CD4-positive, alpha-beta T cell (primary cell): ENCODE measurements at regions of chr9 and their contacts with region 1.

Region 1: GRCh38 chr9:2023532-2023931 is 8.4 kb downstream of the SMARCA2 start:
- DNase-seq: no peak
- ATAC-seq: no peak
- H3K4me3 ChIP-seq: peak overlapping the region; percentile 1
- H3K4me3 Mint-ChIP-seq: peak overlapping the region; percentile 32
- H3K27ac ChIP-seq: peak overlapping the region in 1 of 2 donors; percentile 59
- H3K27ac Mint-ChIP-seq: peak overlapping the region; percentile 84
- H3K4me1 ChIP-seq: peaks cover 64% of the 10 kb centered on the region
- H3K4me1 Mint-ChIP-seq: peaks cover 99% of the 10 kb centered on the region
- H3K27me3 ChIP-seq: no peaks in the 10 kb centered on the region
- H3K27me3 Mint-ChIP-seq: no peaks in the 10 kb centered on the region
- CTCF ChIP-seq: no peak

Region 2: GRCh38 chr9:1077616-1078015 is 945.9 kb before region 1 on chr9:
- CTCF ChIA-PET with region 1: no interaction called
- POLR2A ChIA-PET with region 1: no interaction called
- intact Hi-C with region 1: no loop called
- DNase-seq: no peak
- ATAC-seq: no peak
- H3K4me3 ChIP-seq: no peak overlapping the region
- H3K4me3 Mint-ChIP-seq: no peak overlapping the region
- H3K27ac ChIP-seq: no peak overlapping the region
- H3K27ac Mint-ChIP-seq: no peak overlapping the region
- H3K4me1 ChIP-seq: no peaks in the 10 kb centered on the region
- H3K4me1 Mint-ChIP-seq: no peaks in the 10 kb centered on the region
- H3K27me3 ChIP-seq: peaks cover 3% of the 10 kb centered on the region in 2 experiments
- H3K27me3 Mint-ChIP-seq: peaks cover 33% of the 10 kb centered on the region
- CTCF ChIP-seq: no peak

Region 3: GRCh38 chr9:2036844-2037590 is 13.5 kb after region 1 on chr9:
- CTCF ChIA-PET with region 1: no interaction called
- POLR2A ChIA-PET with region 1: interaction called, 5 read pairs
- intact Hi-C with region 1: loop called in 1 of 2 experiments (anchors 2 kb)
- DNase-seq: no peak
- ATAC-seq: no peak
- H3K4me3 ChIP-seq: no peak overlapping the region
- H3K4me3 Mint-ChIP-seq: no peak overlapping the region
- H3K27ac ChIP-seq: no peak overlapping the region
- H3K27ac Mint-ChIP-seq: no peak overlapping the region
- H3K4me1 ChIP-seq: no peaks in the 10 kb centered on the region
- H3K4me1 Mint-ChIP-seq: peaks cover 60% of the 10 kb centered on the region
- H3K27me3 ChIP-seq: no peaks in the 10 kb centered on the region
- H3K27me3 Mint-ChIP-seq: no peaks in the 10 kb centered on the region
- CTCF ChIP-seq: no peak

Region 4: DNA sequence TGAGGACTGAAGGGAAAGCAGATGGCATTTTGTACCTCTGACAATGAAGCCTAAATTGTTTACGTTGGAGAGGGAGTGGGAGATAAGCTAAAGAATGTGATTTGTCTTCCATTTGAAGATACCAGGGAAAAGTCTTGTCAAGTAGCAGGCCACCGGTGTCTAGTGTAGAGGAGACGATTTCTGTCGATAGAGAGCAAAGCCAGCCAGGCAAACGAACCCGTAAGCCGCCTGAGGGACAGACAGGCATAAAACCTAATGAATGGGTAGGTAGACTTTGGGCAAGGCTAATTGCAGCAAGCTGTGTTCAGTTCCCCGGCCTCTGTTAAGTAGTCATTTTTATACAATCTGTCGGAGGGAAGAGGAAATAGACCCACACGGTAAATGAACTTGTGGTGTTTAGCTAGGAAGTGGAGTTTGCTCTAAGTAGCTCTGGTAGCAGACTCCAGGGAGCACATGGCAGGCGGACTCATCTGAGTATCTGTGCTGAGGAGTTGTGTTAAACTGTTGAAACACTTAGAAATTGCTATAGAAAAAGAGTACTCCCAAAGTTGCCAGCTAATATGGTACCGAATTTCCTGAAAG is 20.4 kb after region 1 on chr9:
- CTCF ChIA-PET with region 1: interaction called, 3 read pairs
- POLR2A ChIA-PET with region 1: interaction called, 5 read pairs
- intact Hi-C with region 1: loop called in 1 of 2 experiments (anchors 2 kb)
- DNase-seq: no peak
- ATAC-seq: peak; percentile 21
- H3K4me3 ChIP-seq: no peak overlapping the region
- H3K4me3 Mint-ChIP-seq: peak overlapping the region; percentile 2
- H3K27ac ChIP-seq: no peak overlapping the region
- H3K27ac Mint-ChIP-seq: peak overlapping the region; percentile 77
- H3K4me1 ChIP-seq: peaks cover 9% of the 10 kb centered on the region
- H3K4me1 Mint-ChIP-seq: peaks cover 64% of the 10 kb centered on the region
- H3K27me3 ChIP-seq: no peaks in the 10 kb centered on the region
- H3K27me3 Mint-ChIP-seq: no peaks in the 10 kb centered on the region
- CTCF ChIP-seq: no peak

Region 5: DNA sequence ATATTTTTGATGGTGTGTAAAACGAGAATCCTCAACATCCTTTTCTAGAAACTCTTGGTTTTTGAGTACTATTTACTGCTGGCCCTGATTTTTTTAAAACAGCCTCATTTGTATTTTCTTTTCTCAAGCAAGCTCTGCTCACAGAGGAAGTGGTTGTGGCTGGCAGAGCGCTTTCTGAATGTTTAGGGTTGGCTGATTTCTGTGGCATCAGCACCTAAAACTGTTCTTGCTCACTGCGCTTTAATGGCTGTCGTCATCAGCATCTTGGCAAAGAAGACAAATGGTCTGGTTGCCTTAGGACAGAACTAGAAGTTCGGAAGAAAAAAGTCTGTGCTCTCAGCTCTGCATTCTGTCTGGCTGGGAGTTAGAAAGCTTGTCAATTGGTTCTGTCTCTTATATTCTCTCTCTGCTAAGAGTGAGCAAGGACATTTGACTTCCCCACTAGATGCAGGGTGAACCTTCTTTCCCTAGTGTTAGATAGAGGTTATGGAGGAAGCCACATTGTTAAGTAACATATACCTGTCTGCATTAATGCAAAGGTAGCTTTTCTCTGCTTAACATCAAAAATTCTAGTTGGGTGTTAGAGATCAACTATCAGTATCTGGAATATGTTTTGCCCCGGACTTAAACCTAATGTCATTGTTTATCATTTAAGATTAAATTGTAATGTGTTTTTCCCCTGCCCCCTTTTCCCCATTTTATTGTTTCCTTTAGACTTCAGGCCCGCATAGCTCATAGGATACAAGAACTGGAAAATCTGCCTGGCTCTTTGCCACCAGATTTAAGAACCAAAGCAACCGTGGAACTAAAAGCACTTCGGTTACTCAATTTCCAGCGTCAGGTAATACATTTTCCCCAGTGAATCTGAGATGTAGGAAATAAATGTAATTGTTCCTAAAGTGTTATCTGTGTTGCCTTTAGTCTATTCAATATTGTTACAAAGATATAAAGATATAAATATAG is 30.6 kb after region 1 on chr9:
- CTCF ChIA-PET with region 1: interaction called, 8 read pairs
- POLR2A ChIA-PET with region 1: interaction called, 113 read pairs
- intact Hi-C with region 1: loop called in 1 of 2 experiments (anchors 2 kb)
- DNase-seq: peak; percentile 53 to 92 (median 59)
- ATAC-seq: peak; percentile 95
- H3K4me3 ChIP-seq: no peak overlapping the region
- H3K4me3 Mint-ChIP-seq: peak overlapping the region; percentile 71
- H3K27ac ChIP-seq: peak overlapping the region; percentile 55 to 73
- H3K27ac Mint-ChIP-seq: peak overlapping the region; percentile 97
- H3K4me1 ChIP-seq: peaks cover 20% of the 10 kb centered on the region
- H3K4me1 Mint-ChIP-seq: peaks cover 77% of the 10 kb centered on the region
- H3K27me3 ChIP-seq: no peaks in the 10 kb centered on the region
- H3K27me3 Mint-ChIP-seq: no peaks in the 10 kb centered on the region
- CTCF ChIP-seq: peak; percentile 14

Region 6: DNA sequence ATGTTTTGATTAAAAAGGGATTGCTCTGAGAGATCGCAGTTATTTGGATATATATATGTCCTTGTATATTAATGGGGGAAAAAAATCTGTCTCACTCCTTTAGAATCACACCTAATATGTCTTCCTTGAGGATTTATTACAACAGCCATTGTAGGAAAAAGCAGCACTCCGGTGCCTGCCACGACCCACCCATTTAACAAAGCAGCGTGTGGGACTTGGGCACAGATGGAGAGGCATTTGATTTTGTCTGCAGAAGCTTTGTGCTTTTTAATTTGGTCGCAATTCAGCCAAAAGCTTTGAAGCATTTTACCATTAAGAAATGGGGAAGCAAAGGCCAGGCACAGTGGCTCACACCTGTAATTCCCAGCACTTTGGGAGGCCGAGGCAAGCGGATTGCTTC is 150.8 kb after region 1 on chr9:
- CTCF ChIA-PET with region 1: no interaction called
- POLR2A ChIA-PET with region 1: no interaction called
- intact Hi-C with region 1: no loop called
- DNase-seq: no peak
- ATAC-seq: no peak
- H3K4me3 ChIP-seq: no peak overlapping the region
- H3K4me3 Mint-ChIP-seq: no peak overlapping the region
- H3K27ac ChIP-seq: no peak overlapping the region
- H3K27ac Mint-ChIP-seq: no peak overlapping the region
- H3K4me1 ChIP-seq: no peaks in the 10 kb centered on the region
- H3K4me1 Mint-ChIP-seq: peaks cover 22% of the 10 kb centered on the region
- H3K27me3 ChIP-seq: no peaks in the 10 kb centered on the region
- H3K27me3 Mint-ChIP-seq: no peaks in the 10 kb centered on the region
- CTCF ChIP-seq: no peak